ENCODE measurements at regions of chr1 and their contacts with region 1.

Region 1: GRCh38 chr1:23585447-23586015 is 26.2 kb upstream of the ID3 start:
- DNase-seq: no peak
- H3K4me3 ChIP-seq: no peak overlapping the region
- H3K27ac ChIP-seq: no peak overlapping the region
- H3K4me1 ChIP-seq: no peaks in the 10 kb centered on the region
- H3K27me3 ChIP-seq: peaks cover 4 to 8% of the 10 kb centered on the region in 2 experiments
- CTCF ChIP-seq: no peak
- POLR2A ChIP-seq: no peak

Region 2: DNA sequence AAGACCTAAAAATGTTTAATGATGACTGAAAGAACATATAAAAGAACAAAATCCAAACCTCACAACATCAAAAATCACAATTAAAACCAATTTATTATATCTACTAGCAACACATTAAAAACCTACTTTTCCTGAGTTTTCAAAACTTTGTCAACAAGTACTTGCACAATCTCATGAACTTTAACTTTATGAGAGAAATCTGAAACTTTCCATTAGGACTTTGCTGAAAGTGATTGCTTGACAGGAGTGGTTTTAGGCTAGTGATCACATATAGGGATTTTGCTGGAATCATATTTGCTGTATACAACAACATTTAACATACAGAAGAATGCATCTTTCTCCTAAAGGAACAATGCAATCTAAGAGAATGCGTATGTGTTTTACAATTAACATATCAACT is 254.7 kb before region 1 on chr1:
- CTCF ChIA-PET with region 1: no interaction called
- POLR2A ChIA-PET with region 1: interaction called, 11 read pairs
- dilution Hi-C with region 1: no loop called
- intact Hi-C with region 1: no loop called
- DNase-seq: no peak
- H3K4me3 ChIP-seq: no peak overlapping the region
- H3K27ac ChIP-seq: no peak overlapping the region
- H3K4me1 ChIP-seq: no peaks in the 10 kb centered on the region
- H3K27me3 ChIP-seq: no peaks in the 10 kb centered on the region
- CTCF ChIP-seq: no peak
- POLR2A ChIP-seq: no peak

Region 3: DNA sequence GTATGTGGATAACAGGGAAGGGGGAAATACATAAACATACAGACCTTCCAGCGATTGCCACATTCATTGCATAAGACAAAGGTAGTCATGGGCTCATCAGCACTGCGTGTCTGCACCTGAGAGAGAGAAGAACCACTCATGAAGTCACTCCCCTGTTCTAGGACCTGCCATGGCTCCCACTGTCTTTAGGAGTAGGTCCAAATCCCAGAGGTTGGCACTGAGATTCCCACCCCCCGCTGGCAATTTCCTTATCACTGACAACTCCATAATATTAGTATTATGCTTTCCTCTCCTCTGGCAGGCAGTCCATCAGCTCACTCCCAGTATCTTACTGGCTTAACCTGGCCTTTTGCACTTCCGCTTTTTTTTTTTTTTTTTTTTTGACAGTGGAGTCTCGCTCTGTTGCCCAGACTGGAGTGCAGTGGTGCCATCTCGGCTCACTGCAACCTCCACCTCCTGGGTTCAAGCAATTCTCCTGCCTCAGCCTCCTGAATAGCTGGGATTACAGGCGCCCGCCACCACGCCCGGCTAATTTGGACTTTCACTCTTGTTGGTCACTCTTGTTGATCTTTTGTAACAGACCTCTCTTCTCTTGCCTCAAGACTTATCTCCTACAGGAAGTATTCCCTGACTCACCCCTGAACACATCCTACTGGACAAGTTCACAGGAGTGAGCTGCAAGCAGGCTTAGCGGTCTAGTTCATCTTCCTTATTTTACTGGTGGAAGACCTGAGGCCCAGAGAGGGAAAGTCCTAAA is 201.1 kb before region 1 on chr1:
- CTCF ChIA-PET with region 1: no interaction called
- POLR2A ChIA-PET with region 1: no interaction called
- dilution Hi-C with region 1: no loop called
- intact Hi-C with region 1: no loop called
- DNase-seq: peak; percentile 21
- H3K4me3 ChIP-seq: no peak overlapping the region
- H3K27ac ChIP-seq: no peak overlapping the region
- H3K4me1 ChIP-seq: peaks cover 20% of the 10 kb centered on the region
- H3K27me3 ChIP-seq: no peaks in the 10 kb centered on the region
- CTCF ChIP-seq: no peak
- POLR2A ChIP-seq: no peak

Region 4: GRCh38 chr1:23651069-23651808 is 65.7 kb after region 1 on chr1:
- CTCF ChIA-PET with region 1: no interaction called
- POLR2A ChIA-PET with region 1: no interaction called
- dilution Hi-C with region 1: no loop called
- intact Hi-C with region 1: no loop called
- DNase-seq: peak; percentile 41
- H3K4me3 ChIP-seq: no peak overlapping the region
- H3K27ac ChIP-seq: no peak overlapping the region
- H3K4me1 ChIP-seq: no peaks in the 10 kb centered on the region
- H3K27me3 ChIP-seq: peaks cover 7 to 13% of the 10 kb centered on the region in 2 experiments
- CTCF ChIP-seq: no peak
- POLR2A ChIP-seq: no peak